Activated CD8-positive, alpha-beta memory T cell treated with anti-CD3 and anti-CD28 coated beads, Interleukin-2, amount 10 ng/mL, durations not matched to agents 7 days and 5 days (primary cell): ENCODE measurements at regions of chr5 and their contacts with region 1.

Region 1: GRCh38 chr5:168219515-168220410 is 71.7 kb upstream of the WWC1 start:
- DNase-seq: peak; percentile 50
- ATAC-seq: peak; percentile 64
- H3K4me3 Mint-ChIP-seq: no peak overlapping the region
- H3K27ac Mint-ChIP-seq: no peak overlapping the region
- H3K4me1 Mint-ChIP-seq: peaks cover 2% of the 10 kb centered on the region
- H3K27me3 Mint-ChIP-seq: peaks cover 16% of the 10 kb centered on the region

Region 2: GRCh38 chr5:167723254-167723871 is 496.4 kb before region 1 on chr5:
- CTCF ChIA-PET with region 1: interaction called, 34 read pairs
- DNase-seq: peak; percentile 64
- ATAC-seq: peak; percentile 58
- H3K4me3 Mint-ChIP-seq: no peak overlapping the region
- H3K27ac Mint-ChIP-seq: no peak overlapping the region
- H3K4me1 Mint-ChIP-seq: no peaks in the 10 kb centered on the region
- H3K27me3 Mint-ChIP-seq: peaks cover 2% of the 10 kb centered on the region

Region 3: GRCh38 chr5:168114444-168115017 is 105.2 kb before region 1 on chr5:
- CTCF ChIA-PET with region 1: interaction called, 10 read pairs
- DNase-seq: peak; percentile 54
- ATAC-seq: peak; percentile 47
- H3K4me3 Mint-ChIP-seq: no peak overlapping the region
- H3K27ac Mint-ChIP-seq: no peak overlapping the region
- H3K4me1 Mint-ChIP-seq: no peaks in the 10 kb centered on the region
- H3K27me3 Mint-ChIP-seq: peaks cover 6% of the 10 kb centered on the region